Mammary epithelial cell (primary cell): ENCODE measurements at regions of chr16 and their contacts with region 1.

Region 1: DNA sequence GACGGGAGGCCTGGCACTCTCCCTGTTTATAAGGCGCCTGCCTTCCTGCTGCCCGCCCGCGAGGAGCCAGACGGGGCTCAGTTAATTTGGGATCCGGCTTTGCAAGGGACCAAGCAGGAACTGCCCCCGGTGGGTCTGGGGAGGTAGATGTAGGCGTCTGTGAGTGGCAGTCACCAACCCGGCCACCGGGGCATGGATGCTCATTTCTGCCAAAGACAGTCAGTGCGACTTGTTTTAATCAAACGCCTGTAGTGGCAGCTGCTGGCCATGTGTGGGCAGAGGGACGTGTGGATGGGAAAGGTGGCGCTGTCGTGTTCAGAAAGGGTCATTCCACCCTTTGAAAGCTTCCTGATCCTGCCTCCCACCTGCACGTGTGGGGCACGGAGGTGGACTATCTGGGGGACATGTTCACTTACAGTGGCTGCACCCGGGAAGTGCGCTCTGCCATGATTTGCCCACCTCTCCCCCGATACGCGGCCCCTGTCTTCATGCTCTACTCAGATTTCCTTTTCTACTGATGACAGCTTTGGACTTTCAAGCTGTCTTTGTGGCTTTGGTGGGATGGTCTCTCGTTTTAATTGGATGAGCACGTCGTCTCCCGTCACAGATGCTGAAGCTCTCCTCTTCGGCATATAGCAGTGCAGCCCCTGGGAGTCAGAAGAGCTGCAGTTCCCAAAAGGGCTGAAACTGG is 60.3 kb upstream of the CIBAR2 start:
- DNase-seq: no peak
- H3K4me3 ChIP-seq: peak overlapping the region in 1 of 3 experiments; percentile 25
- H3K27ac ChIP-seq: no peak overlapping the region
- H3K4me1 ChIP-seq: peaks cover 52% of the 10 kb centered on the region
- H3K27me3 ChIP-seq: no peaks in the 10 kb centered on the region
- CTCF ChIP-seq: no peak

Region 2: GRCh38 chr16:85098565-85098964 is 74.0 kb before region 1 on chr16:
- CTCF ChIA-PET with region 1: no interaction called
- dilution Hi-C with region 1: loop called (anchors 5 kb)
- in situ Hi-C with region 1: no loop called
- intact Hi-C with region 1: no loop called
- DNase-seq: no peak
- H3K4me3 ChIP-seq: no peak overlapping the region
- H3K27ac ChIP-seq: no peak overlapping the region
- H3K4me1 ChIP-seq: peaks cover 3% of the 10 kb centered on the region
- H3K27me3 ChIP-seq: no peaks in the 10 kb centered on the region
- CTCF ChIP-seq: no peak

Region 3: DNA sequence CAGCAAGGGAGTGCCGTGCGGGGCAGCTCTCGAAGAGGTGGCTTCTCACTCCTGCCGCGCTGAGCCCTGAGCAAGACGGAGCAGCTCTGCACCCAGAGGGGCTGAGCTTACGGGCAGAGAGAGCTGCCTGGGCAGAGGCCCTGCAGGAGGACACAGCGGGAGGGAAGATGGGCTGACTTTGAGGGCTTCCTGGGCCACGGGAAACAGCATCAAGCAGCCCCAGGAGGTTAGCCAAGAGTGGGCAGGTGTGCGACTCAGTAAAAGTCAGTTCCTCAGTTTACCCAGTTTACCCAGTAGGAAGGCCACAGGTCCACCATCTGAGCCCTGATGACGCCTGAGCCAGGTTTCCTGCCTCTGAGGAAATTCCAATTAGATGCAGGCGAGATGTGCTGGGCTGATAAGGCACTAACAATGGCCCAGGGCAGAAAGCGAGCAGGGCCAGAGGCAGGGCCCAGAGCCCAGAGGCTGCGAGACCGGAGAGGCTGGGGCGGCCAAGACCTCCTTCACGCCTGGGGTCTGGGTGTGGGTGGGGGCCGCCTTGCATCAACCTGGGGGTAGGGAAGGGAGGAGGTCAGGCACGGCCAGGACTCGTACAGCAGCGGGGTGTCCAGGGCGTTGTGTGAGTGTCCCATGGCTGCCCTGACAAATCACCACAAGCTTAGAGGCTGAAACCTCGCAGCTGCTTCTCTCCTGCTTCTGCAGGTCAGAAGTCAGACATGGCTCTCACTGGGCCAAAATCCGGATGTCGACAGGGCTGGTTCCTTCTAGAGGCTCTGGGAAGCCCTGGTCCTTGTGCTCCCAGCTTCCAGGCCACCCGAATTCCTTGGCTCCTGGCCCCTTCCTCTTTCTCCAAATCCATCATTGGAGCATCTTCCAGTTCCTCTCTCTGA is 28.3 kb before region 1 on chr16:
- CTCF ChIA-PET with region 1: no interaction called
- dilution Hi-C with region 1: loop called (anchors 5 kb)
- in situ Hi-C with region 1: no loop called
- intact Hi-C with region 1: no loop called
- DNase-seq: no peak
- H3K4me3 ChIP-seq: no peak overlapping the region
- H3K27ac ChIP-seq: no peak overlapping the region
- H3K4me1 ChIP-seq: no peaks in the 10 kb centered on the region
- H3K27me3 ChIP-seq: no peaks in the 10 kb centered on the region
- CTCF ChIP-seq: no peak

Region 4: DNA sequence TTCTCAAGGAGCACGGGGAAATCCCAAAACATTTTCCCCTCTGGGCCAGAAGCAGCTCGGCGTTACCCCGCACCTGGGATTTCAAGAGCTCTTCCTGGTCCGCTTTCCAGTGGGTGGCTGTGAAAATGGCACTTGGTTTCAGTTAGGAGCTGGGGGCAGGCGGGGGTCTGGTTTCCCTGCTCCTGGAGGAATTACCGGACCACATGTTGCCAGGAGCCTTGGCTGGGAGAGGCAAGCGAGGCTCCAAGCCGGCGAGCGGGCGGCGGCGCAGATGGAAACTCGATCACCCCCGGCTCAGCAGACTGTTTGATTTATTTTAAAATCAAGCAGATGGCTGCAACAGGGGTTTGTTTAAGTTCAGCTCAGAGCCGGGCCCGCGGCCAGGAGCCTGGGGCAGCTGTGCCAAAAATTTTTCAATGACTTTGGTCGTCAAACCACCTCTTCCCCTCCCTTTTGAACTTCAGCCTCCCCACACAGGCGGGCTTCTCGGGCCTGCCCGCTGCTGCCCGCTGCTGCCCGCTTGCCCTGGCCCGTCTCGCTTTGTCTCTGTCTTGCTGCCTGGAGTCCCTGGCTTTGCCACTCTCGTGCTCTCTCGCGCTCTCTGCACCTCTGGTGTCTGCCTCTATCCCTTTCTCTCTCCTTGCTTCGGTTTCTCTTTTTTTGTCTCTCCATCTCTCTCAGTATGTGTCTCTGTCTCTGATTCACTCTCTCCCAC is 47.7 kb after region 1 on chr16:
- CTCF ChIA-PET with region 1: no interaction called
- dilution Hi-C with region 1: no loop called
- in situ Hi-C with region 1: no loop called
- intact Hi-C with region 1: loop called (anchors 5 kb)
- DNase-seq: peak; percentile 76
- H3K4me3 ChIP-seq: peak overlapping the region; percentile 16 to 38 (median 23)
- H3K27ac ChIP-seq: peak overlapping the region; percentile 68
- H3K4me1 ChIP-seq: peaks cover 14% of the 10 kb centered on the region
- H3K27me3 ChIP-seq: no peaks in the 10 kb centered on the region
- CTCF ChIP-seq: peak in 1 of 2 donors; percentile 10

Region 5: GRCh38 chr16:85245307-85246172 is 72.9 kb after region 1 on chr16:
- CTCF ChIA-PET with region 1: no interaction called
- dilution Hi-C with region 1: no loop called
- in situ Hi-C with region 1: no loop called
- intact Hi-C with region 1: loop called (anchors 5 kb)
- DNase-seq: peak; percentile 38
- H3K4me3 ChIP-seq: no peak overlapping the region
- H3K27ac ChIP-seq: no peak overlapping the region
- H3K4me1 ChIP-seq: no peaks in the 10 kb centered on the region
- H3K27me3 ChIP-seq: no peaks in the 10 kb centered on the region
- CTCF ChIP-seq: peak; percentile 60 to 92